Psoas muscle (tissue), 8 donors: ENCODE measurements at regions of chr9 and their contacts with region 1.

Region 1: DNA sequence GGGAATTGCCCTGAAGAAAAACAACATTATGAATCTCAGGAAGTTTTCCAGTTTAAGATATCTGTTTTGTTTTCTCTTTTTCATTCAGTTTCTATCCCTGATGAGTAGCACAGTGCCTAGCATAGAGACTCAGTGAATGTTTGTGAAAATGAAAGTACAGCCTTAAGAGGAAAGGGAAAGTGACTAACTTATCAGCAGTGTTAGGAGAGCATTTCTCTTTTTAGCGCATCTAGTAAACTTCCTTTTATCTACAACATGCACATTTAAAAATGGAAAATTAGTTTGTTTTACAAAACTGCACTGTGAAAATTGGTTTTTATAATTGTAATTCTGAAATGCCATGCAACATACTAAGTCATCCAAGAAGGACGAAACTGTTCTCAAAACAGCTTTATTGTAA is 110.8 kb downstream of the SMARCA2 start:
- DNase-seq: no peak
- ATAC-seq: no peak
- H3K4me3 ChIP-seq: peak overlapping the region; percentile 26
- H3K27ac ChIP-seq: peak overlapping the region; percentile 65
- H3K4me1 ChIP-seq: peaks cover 55% of the 10 kb centered on the region
- H3K27me3 ChIP-seq: no peaks in the 10 kb centered on the region
- CTCF ChIP-seq: no peak

Region 2: DNA sequence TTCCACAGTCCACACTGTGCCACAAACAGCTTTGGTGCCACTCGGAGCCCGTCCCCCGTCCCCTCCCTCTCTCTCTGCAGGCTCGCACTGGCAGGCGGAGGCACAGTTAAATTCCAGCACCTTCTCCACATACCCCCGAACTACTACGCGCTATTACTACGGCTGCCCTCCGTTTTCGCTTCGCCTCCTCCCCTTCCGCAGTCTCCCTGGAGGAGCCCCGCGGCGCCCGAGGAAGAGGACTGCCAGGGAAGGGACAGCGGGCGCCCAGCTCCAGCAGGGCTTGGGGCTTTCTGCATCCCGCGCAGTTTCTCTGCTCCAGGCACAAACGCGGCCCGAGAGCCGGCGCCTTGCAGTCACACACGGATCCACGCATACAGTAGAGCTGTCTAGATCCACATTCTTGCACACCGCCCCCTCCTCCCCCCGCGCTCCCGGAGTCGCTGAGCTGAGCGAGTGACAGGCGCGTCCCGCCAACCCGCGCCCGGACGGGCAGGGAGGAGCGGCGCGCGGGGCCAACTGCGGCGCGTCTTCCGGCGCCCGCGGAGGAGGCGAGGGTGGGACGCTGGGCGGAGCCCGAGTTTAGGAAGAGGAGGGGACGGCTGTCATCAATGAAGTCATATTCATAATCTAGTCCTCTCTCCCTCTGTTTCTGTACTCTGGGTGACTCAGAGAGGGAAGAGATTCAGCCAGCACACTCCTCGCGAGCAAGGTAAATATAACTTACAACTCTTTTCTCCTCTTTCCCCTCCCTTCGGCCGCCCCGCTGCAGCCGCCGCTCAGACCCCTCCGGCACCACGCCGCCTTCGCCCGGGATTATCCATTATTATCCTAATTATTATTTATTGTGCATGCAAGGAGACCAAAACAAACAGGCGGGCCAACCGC is 111.0 kb before region 1 on chr9 and contains the start of gene SMARCA2:
- intact Hi-C with region 1: no loop called
- DNase-seq: peak; percentile 98 to 99
- ATAC-seq: peak; percentile 83 to 92 (median 86)
- H3K4me3 ChIP-seq: peak within 1 kb of the TSS; percentile 95
- H3K27ac ChIP-seq: peak within 1 kb of the TSS; percentile 99
- H3K4me1 ChIP-seq: peaks cover 27% of the 10 kb centered on the region
- H3K27me3 ChIP-seq: no peaks in the 10 kb centered on the region
- CTCF ChIP-seq: no peak
- total RNA-seq, gene SMARCA2: 62.2 to 97.2 (median 80.6) TPM

Region 3: GRCh38 chr9:2739063-2739462 is 613.2 kb after region 1 on chr9:
- intact Hi-C with region 1: loop called in 1 of 2 experiments (anchors 10 kb)
- DNase-seq: no peak
- ATAC-seq: no peak
- H3K4me3 ChIP-seq: no peak overlapping the region
- H3K27ac ChIP-seq: no peak overlapping the region
- H3K4me1 ChIP-seq: no peaks in the 10 kb centered on the region
- H3K27me3 ChIP-seq: no peaks in the 10 kb centered on the region
- CTCF ChIP-seq: no peak